Mammary epithelial cell (primary cell): ENCODE measurements at regions of chr1 and their contacts with region 1.

Region 1: DNA sequence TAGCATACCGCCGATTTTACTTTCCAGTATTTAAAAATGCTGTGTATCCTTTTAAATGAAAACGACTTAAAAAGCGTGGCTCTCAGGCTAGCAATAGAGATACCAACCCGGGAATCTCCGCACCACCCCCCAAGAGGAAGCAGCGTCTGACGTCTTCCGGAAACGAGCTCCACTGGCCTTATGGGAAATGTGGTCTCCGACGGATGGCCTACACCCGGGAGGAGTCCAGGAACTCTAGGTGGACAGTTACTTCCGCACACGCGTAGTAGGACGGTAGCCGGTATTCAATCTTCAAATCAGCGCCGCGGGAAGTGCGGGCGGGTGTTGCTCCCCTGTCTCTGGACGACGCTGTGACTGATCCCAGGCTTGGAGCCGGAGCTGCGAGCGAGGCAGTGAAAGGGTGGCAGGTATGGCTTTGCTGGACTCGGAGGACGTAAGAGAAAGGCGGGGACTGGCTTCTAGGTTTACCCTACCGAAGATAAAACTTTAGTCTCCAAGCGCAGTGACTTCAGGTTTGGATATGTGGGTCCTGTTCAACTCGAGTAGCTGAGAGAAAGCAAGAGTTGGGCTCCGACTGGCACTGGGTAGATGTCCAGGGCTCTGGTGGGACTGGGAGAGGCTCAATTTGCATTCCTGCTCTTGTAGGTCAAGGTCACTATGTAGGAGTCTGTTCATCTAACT is at the start of gene ZNF684:
- DNase-seq: peak; percentile 97
- H3K4me3 ChIP-seq: peak within 1 kb of the TSS; percentile 49 to 68 (median 61)
- H3K27ac ChIP-seq: peak within 1 kb of the TSS; percentile 63
- H3K4me1 ChIP-seq: peaks cover 10% of the 10 kb centered on the region
- H3K27me3 ChIP-seq: no peaks in the 10 kb centered on the region
- CTCF ChIP-seq: no peak
- total RNA-seq, gene ZNF684: 3.7 to 4.1 TPM

Region 2: DNA sequence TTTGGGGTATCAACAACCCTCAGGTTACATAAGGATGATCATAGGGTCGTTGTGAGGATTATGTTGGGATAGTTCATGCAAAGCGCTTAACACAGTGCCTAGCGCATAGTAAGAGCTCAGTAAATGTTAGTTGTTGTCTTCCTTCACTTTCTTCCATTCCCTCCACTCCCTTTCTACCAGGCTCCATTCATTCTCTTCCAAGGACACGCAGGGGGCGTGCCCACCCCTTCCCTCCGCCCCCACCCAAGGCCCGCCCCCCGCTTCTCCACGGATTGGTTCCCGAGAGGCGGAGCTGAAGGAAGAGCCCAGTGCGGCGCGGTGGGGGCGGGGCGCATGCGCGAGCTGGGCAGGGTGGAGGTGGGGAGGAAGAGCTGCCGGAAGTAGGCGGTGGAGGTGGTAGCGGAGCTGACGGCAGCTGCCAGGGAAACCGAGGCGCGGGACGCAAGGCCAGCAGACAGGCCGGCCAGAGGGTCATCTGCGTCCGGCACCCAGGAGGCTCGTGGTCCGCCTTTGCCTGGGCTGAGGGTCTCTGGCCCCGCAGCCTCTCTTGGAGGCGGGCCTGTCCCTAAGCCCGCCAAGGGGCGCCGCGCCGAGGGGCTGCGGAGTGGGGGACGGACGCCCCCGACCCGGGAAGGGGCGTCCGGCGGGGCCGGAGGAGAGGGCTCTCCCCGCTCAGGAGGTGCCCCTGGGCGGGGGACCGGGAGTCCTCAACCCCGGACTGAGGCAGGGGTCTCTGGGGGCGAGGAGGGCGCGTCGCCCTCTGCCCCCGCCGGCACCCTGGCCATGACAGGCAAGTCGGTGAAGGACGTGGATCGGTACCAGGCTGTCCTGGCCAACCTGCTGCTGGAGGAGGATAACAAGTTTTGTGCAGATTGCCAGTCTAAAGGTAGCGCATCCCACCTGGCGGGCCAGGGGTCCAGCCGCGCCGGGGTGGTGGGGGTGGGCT is 157.9 kb before region 1 on chr1 and contains the start of gene SMAP2:
- CTCF ChIA-PET with region 1: no interaction called
- dilution Hi-C with region 1: no loop called
- in situ Hi-C with region 1: no loop called
- intact Hi-C with region 1: no loop called
- DNase-seq: peak; percentile 95
- H3K4me3 ChIP-seq: peak within 1 kb of the TSS; percentile 65 to 80 (median 71)
- H3K27ac ChIP-seq: peak within 1 kb of the TSS; percentile 65
- H3K4me1 ChIP-seq: peaks cover 12% of the 10 kb centered on the region
- H3K27me3 ChIP-seq: no peaks in the 10 kb centered on the region
- CTCF ChIP-seq: no peak
- total RNA-seq, gene SMAP2: 17.5 to 20.5 TPM

Region 3: DNA sequence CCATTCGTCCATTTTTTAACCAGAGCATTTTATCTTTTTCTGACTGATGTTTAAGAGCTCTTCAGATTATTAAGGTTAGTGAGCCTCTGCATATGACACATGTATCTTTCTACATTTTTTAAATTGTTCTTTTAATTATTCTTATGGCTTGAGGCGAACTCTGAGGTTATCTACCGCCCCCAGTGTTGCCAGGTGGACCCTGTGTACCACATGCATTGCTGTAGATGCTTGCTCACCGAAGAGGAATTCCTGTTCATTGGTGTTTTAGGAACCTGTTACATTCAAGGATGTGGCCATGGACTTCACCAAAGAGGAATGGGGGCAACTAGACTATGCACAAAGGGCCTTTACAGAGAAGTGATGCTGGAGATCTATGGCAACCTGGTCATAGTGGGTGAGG is 31.7 kb after region 1 on chr1:
- CTCF ChIA-PET with region 1: interaction called, 24 read pairs
- dilution Hi-C with region 1: no loop called
- in situ Hi-C with region 1: no loop called
- intact Hi-C with region 1: no loop called
- DNase-seq: peak; percentile 28
- H3K4me3 ChIP-seq: no peak overlapping the region
- H3K27ac ChIP-seq: no peak overlapping the region
- H3K4me1 ChIP-seq: no peaks in the 10 kb centered on the region
- H3K27me3 ChIP-seq: no peaks in the 10 kb centered on the region
- CTCF ChIP-seq: no peak

Region 4: GRCh38 chr1:40583980-40584379 is 52.5 kb after region 1 on chr1:
- CTCF ChIA-PET with region 1: no interaction called
- dilution Hi-C with region 1: no loop called
- in situ Hi-C with region 1: no loop called
- intact Hi-C with region 1: loop called (anchors 1 kb)
- DNase-seq: peak; percentile 34
- H3K4me3 ChIP-seq: no peak overlapping the region
- H3K27ac ChIP-seq: peak overlapping the region; percentile 6
- H3K4me1 ChIP-seq: no peaks in the 10 kb centered on the region
- H3K27me3 ChIP-seq: no peaks in the 10 kb centered on the region
- CTCF ChIP-seq: no peak